ENCODE measurements at regions of chr16 and their contacts with region 1.

Region 1: DNA sequence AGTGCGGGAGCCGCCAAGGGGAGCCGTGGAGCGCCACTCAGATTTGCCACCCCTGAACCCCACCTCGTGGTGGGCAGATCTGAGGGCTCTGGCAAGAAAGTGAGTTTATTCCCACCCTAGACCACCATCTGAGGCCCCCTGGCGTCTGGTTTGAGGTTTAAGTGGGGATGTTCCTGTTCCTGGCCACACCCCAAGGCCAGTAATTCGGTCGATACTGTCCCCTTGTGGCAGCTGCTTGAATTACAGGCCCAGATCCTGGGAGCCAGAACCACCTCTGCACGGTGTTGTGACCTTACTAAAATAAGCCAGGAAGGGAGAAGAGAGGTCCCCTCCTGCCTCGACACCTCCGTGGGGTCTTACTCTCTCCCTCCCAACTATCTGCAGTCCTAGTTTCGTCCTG is 3.3 kb upstream of the LAT start:
- DNase-seq: peak in 5 of 14 experiments; percentile 20 to 57 (median 49)
- ATAC-seq: no peak
- H3K4me3 ChIP-seq: no peak overlapping the region
- H3K4me3 Mint-ChIP-seq: no peak overlapping the region
- H3K27ac ChIP-seq: no peak overlapping the region
- H3K27ac Mint-ChIP-seq: no peak overlapping the region
- H3K4me1 ChIP-seq: peaks cover 41% of the 10 kb centered on the region
- H3K4me1 Mint-ChIP-seq: peaks cover 44% of the 10 kb centered on the region
- H3K27me3 ChIP-seq: no peaks in the 10 kb centered on the region
- H3K27me3 Mint-ChIP-seq: no peaks in the 10 kb centered on the region
- CTCF ChIP-seq: peak; percentile 42

Region 2: DNA sequence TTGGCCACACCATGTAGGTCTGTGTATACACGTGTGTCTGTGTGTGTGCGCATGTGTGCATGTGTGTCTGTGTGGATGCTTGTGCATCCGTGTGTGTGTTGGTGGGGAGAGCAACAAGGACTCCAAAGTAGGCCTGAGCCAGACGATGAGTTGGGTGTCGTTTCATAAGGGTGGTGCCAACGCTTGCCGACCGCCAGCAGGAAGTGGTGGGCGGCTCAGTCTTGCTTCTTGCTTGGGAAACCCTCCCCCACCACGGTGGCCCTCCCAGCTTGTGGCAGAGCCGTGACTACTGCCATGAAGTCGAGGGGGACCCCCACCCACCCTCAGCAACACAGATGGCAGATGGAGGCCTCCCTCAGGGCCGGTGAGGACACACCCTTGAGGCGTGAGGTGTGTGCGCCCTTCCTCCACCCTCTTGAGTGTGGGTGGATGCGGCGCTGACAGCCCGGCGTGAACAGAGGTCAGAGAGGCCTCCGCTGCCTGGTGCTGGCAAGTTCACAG is 671.7 kb before region 1 on chr16:
- CTCF ChIA-PET with region 1: no interaction called
- POLR2A ChIA-PET with region 1: no interaction called
- intact Hi-C with region 1: loop called in 1 of 2 experiments (anchors 5 kb)
- DNase-seq: peak; percentile 65 to 97 (median 85)
- ATAC-seq: peak; percentile 92
- H3K4me3 ChIP-seq: peak overlapping the region; percentile 32
- H3K4me3 Mint-ChIP-seq: peak overlapping the region; percentile 75
- H3K27ac ChIP-seq: peak overlapping the region; percentile 86 to 89
- H3K27ac Mint-ChIP-seq: peak overlapping the region; percentile 96
- H3K4me1 ChIP-seq: peaks cover 59% of the 10 kb centered on the region
- H3K4me1 Mint-ChIP-seq: peaks cover 69% of the 10 kb centered on the region
- H3K27me3 ChIP-seq: no peaks in the 10 kb centered on the region
- H3K27me3 Mint-ChIP-seq: no peaks in the 10 kb centered on the region
- CTCF ChIP-seq: no peak

Region 3: DNA sequence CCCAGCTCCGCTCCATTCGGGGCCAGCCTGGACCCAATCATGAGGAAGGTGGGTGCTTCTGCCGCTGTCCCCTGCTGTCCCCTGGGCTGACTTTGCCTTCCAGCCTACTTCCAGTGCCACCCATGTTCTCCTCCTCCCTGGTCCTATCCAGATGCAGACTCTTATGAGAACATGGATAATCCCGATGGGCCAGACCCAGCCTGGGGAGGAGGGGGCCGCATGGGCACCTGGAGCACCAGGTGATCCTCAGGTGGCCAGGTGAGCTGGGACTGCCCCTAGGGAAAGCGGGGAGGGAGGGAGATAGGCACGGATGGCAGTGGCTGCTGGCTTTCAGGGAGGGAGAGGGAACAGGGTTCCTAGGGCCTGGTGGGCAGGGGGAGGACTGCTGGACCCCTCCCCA is 42.8 kb before region 1 on chr16:
- CTCF ChIA-PET with region 1: no interaction called
- POLR2A ChIA-PET with region 1: no interaction called
- intact Hi-C with region 1: no loop called
- DNase-seq: no peak
- ATAC-seq: no peak
- H3K4me3 ChIP-seq: no peak overlapping the region
- H3K4me3 Mint-ChIP-seq: no peak overlapping the region
- H3K27ac ChIP-seq: no peak overlapping the region
- H3K27ac Mint-ChIP-seq: no peak overlapping the region
- H3K4me1 ChIP-seq: peaks cover 14% of the 10 kb centered on the region
- H3K4me1 Mint-ChIP-seq: peaks cover 28% of the 10 kb centered on the region
- H3K27me3 ChIP-seq: no peaks in the 10 kb centered on the region
- H3K27me3 Mint-ChIP-seq: no peaks in the 10 kb centered on the region
- CTCF ChIP-seq: no peak

Region 4: DNA sequence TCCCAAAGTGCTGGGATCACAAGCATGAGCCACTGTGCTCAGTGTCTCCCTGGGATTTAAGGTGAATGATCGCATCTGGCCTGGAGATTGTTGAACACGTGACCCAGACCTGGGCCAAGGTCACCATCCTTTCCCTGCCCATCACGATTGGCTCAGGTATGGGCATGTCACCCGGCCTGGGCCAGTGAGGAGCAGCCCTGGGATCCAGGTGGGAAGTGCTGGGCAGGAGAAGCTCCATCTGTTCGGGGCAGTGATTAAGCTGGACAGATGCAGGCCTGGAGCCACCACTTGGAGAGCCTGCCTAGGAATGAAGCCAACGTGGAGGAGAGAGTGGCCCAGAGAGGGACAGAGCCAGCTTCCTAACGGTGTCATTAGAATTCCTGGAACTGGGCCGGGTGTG is 10.2 kb after region 1 on chr16:
- CTCF ChIA-PET with region 1: interaction called, 22 read pairs
- POLR2A ChIA-PET with region 1: interaction called, 25 read pairs
- intact Hi-C with region 1: no loop called
- DNase-seq: no peak
- ATAC-seq: no peak
- H3K4me3 ChIP-seq: no peak overlapping the region
- H3K4me3 Mint-ChIP-seq: no peak overlapping the region
- H3K27ac ChIP-seq: no peak overlapping the region
- H3K27ac Mint-ChIP-seq: peak overlapping the region; percentile 100
- H3K4me1 ChIP-seq: peaks cover 62% of the 10 kb centered on the region
- H3K4me1 Mint-ChIP-seq: peaks cover 51% of the 10 kb centered on the region
- H3K27me3 ChIP-seq: no peaks in the 10 kb centered on the region
- H3K27me3 Mint-ChIP-seq: no peaks in the 10 kb centered on the region
- CTCF ChIP-seq: no peak

Region 5: GRCh38 chr16:29007730-29008593 is 26.4 kb after region 1 on chr16:
- CTCF ChIA-PET with region 1: interaction called, 3 read pairs
- POLR2A ChIA-PET with region 1: interaction called, 45 read pairs
- intact Hi-C with region 1: loop called (anchors 2 kb)
- DNase-seq: peak; percentile 48 to 85 (median 72)
- ATAC-seq: peak; percentile 79
- H3K4me3 ChIP-seq: no peak overlapping the region
- H3K4me3 Mint-ChIP-seq: peak overlapping the region; percentile 60
- H3K27ac ChIP-seq: peak overlapping the region; percentile 73 to 77
- H3K27ac Mint-ChIP-seq: peak overlapping the region; percentile 97
- H3K4me1 ChIP-seq: peaks cover 63% of the 10 kb centered on the region
- H3K4me1 Mint-ChIP-seq: peaks cover 67% of the 10 kb centered on the region
- H3K27me3 ChIP-seq: no peaks in the 10 kb centered on the region
- H3K27me3 Mint-ChIP-seq: no peaks in the 10 kb centered on the region
- CTCF ChIP-seq: no peak

Region 6: DNA sequence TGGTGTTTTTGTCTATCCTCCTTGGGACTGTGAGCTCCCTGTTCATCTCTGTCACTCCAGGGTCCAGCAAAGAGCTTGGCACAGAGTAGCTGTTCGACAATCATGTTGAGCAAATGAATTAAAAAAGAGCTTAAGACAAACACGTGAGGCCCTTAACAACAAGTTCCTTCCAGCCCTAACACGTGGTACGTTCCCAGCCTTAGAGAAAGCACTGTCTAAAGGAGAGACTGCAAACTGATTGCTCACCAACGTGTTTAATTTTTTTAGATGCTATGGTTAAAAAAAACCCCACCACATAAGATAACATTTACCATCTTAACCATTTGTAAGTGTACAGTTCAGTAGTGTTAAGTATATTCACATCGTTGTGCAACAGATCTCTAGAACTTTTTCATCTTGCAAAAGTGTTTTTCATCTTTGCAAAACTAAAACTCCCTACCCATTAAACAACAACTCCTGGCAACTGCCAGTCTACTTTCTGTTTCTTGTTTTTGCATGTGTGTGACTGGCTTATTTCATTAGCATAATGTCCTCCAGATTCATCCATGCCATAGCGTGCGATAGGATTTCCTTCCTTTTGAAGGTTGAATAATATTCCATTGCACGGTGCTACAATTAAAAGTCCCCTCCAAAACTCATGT is 31.5 kb after region 1 on chr16:
- CTCF ChIA-PET with region 1: interaction called, 3 read pairs
- POLR2A ChIA-PET with region 1: interaction called, 100 read pairs
- intact Hi-C with region 1: loop called (anchors 2 kb)
- DNase-seq: peak in 8 of 14 experiments; percentile 17 to 78 (median 50)
- ATAC-seq: peak; percentile 72
- H3K4me3 ChIP-seq: no peak overlapping the region
- H3K4me3 Mint-ChIP-seq: peak overlapping the region; percentile 74
- H3K27ac ChIP-seq: peak overlapping the region; percentile 58 to 64
- H3K27ac Mint-ChIP-seq: peak overlapping the region; percentile 97
- H3K4me1 ChIP-seq: peaks cover 61% of the 10 kb centered on the region
- H3K4me1 Mint-ChIP-seq: peaks cover 57% of the 10 kb centered on the region
- H3K27me3 ChIP-seq: no peaks in the 10 kb centered on the region
- H3K27me3 Mint-ChIP-seq: no peaks in the 10 kb centered on the region
- CTCF ChIP-seq: no peak

Region 7: GRCh38 chr16:29023279-29024277 is 42.1 kb after region 1 on chr16:
- CTCF ChIA-PET with region 1: interaction called, 7 read pairs
- POLR2A ChIA-PET with region 1: interaction called, 100 read pairs
- intact Hi-C with region 1: no loop called
- DNase-seq: peak in 2 of 14 experiments; percentile 24 to 60
- ATAC-seq: peak; percentile 28
- H3K4me3 ChIP-seq: no peak overlapping the region
- H3K4me3 Mint-ChIP-seq: peak overlapping the region; percentile 67
- H3K27ac ChIP-seq: peak overlapping the region; percentile 45 to 57
- H3K27ac Mint-ChIP-seq: peak overlapping the region; percentile 80
- H3K4me1 ChIP-seq: peaks cover 48% of the 10 kb centered on the region
- H3K4me1 Mint-ChIP-seq: peaks cover 64% of the 10 kb centered on the region
- H3K27me3 ChIP-seq: no peaks in the 10 kb centered on the region
- H3K27me3 Mint-ChIP-seq: no peaks in the 10 kb centered on the region
- CTCF ChIP-seq: no peak

Region 8: DNA sequence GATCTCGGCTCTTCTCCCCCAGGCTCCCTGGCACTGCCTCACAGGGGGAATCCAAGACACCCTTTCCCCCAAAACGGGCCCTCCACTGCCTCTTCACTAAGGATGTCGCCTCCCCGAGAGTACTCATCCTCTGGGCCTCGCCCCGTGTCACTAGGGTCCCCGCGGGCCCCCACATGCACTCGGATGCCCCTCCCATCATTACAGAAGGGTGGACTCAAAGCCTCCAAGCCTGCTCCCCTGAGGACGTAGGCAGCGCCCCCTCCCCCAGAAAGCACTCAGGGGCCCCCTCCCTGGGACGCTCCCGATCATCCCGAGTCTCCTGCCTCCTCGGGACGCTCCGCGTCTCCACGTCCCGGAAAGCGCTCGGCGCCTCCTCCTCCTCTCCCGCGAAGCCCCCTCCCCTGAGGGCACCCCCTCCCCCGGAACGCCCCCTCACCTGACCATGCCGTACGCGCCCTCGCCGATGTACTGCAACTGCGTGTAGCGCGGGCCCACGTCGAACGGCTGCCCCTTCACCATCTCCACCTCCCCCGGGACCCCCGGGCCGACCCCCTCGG is 1141.2 kb after region 1 on chr16:
- CTCF ChIA-PET with region 1: no interaction called
- POLR2A ChIA-PET with region 1: no interaction called
- intact Hi-C with region 1: no loop called
- DNase-seq: peak in 5 of 14 experiments; percentile 4 to 39 (median 26)
- ATAC-seq: peak; percentile 16
- H3K4me3 ChIP-seq: peak overlapping the region; percentile 92
- H3K4me3 Mint-ChIP-seq: peak overlapping the region; percentile 91
- H3K27ac ChIP-seq: peak overlapping the region; percentile 37 to 59
- H3K27ac Mint-ChIP-seq: peak overlapping the region; percentile 81
- H3K4me1 ChIP-seq: peaks cover 33% of the 10 kb centered on the region
- H3K4me1 Mint-ChIP-seq: peaks cover 28% of the 10 kb centered on the region
- H3K27me3 ChIP-seq: no peaks in the 10 kb centered on the region
- H3K27me3 Mint-ChIP-seq: no peaks in the 10 kb centered on the region
- CTCF ChIP-seq: no peak

Measured in CD4-positive, alpha-beta T cell (primary cell).